Stomach (tissue), 19 donors: ENCODE measurements at regions of chr3 and their contacts with region 1.

Region 1: DNA sequence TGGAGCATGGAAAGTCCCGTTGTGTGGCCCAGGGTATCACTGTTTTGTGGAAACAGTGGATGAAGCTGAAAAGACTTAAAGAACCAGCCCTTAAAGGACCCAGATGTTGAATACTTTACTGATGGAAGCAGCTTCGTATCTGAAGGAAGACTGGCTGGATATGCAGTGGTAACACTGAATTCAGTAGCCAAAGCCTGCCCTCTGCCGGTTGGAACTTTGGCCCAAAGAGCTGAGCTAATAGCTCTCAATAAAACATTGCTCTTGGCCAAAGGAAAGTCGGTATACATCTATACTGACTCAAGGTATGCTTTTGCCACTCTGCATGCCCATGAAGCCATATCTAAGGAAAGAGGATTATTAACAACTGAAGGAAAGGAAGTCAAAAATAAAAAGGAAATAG is 885.4 kb downstream of the PDCD6IP start:
- DNase-seq: peak; percentile 69 to 76
- H3K4me3 ChIP-seq: no peak overlapping the region
- H3K27ac ChIP-seq: no peak overlapping the region
- H3K4me1 ChIP-seq: no peaks in the 10 kb centered on the region
- H3K27me3 ChIP-seq: no peaks in the 10 kb centered on the region
- CTCF ChIP-seq: peak in 5 of 7 experiments; percentile 21 to 43 (median 30)
- EP300 ChIP-seq: no peak
- POLR2A ChIP-seq: no peak

Region 2: GRCh38 chr3:33883538-33883950 is 800.3 kb before region 1 on chr3:
- intact Hi-C with region 1: loop called (anchors 10 kb)
- DNase-seq: peak in 1 of 2 donors; percentile 69
- H3K4me3 ChIP-seq: peak overlapping the region in 3 of 4 donors; percentile 1 to 16 (median 3)
- H3K27ac ChIP-seq: no peak overlapping the region
- H3K4me1 ChIP-seq: peaks cover 0 to 10% (median 4%) of the 10 kb centered on the region in 4 donors
- H3K27me3 ChIP-seq: no peaks in the 10 kb centered on the region
- CTCF ChIP-seq: peak in 5 of 7 experiments; percentile 33 to 90 (median 81)
- EP300 ChIP-seq: no peak
- POLR2A ChIP-seq: no peak

Region 3: GRCh38 chr3:33980252-33980651 is 703.6 kb before region 1 on chr3:
- intact Hi-C with region 1: loop called (anchors 10 kb)
- DNase-seq: peak in 1 of 2 donors; percentile 15
- H3K4me3 ChIP-seq: no peak overlapping the region
- H3K27ac ChIP-seq: no peak overlapping the region
- H3K4me1 ChIP-seq: no peaks in the 10 kb centered on the region
- H3K27me3 ChIP-seq: no peaks in the 10 kb centered on the region
- CTCF ChIP-seq: peak in 5 of 7 experiments; percentile 7 to 50 (median 20)
- EP300 ChIP-seq: no peak
- POLR2A ChIP-seq: no peak

Region 4: DNA sequence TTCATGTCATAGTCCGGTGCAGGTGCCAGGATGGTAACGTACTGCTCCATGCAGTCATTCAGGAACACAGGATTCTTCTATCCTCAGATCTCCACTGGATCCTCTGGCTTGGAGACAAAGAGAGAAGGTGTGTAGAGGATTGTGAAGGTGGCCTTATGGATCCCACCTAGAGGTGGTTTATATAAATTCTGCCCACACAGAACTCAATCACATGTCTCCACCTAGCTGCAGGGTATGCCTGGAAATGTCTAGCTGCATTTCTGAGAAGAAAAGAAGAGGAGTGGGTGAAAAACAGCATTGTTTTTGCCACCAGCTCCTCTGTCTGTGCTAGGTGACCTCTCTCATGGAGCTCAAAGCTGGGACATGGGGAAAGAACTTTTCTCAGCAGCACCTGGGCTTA is 406.7 kb before region 1 on chr3:
- intact Hi-C with region 1: no loop called
- DNase-seq: no peak
- H3K4me3 ChIP-seq: no peak overlapping the region
- H3K27ac ChIP-seq: no peak overlapping the region
- H3K4me1 ChIP-seq: no peaks in the 10 kb centered on the region
- H3K27me3 ChIP-seq: no peaks in the 10 kb centered on the region
- CTCF ChIP-seq: no peak
- EP300 ChIP-seq: no peak
- POLR2A ChIP-seq: no peak

Region 5: GRCh38 chr3:35137612-35138011 is 453.8 kb after region 1 on chr3:
- intact Hi-C with region 1: no loop called
- DNase-seq: no peak
- H3K4me3 ChIP-seq: no peak overlapping the region
- H3K27ac ChIP-seq: no peak overlapping the region
- H3K4me1 ChIP-seq: no peaks in the 10 kb centered on the region
- H3K27me3 ChIP-seq: no peaks in the 10 kb centered on the region
- CTCF ChIP-seq: no peak
- EP300 ChIP-seq: no peak
- POLR2A ChIP-seq: no peak